RWPE1 (cell line): ENCODE measurements at regions of chr6 and their contacts with region 1.

Region 1: GRCh38 chr6:29336269-29336668 is 32.4 kb downstream of the OR5V1 start:
- DNase-seq: no peak
- H3K27ac ChIP-seq: no peak overlapping the region
- CTCF ChIP-seq: no peak

Region 2: GRCh38 chr6:29502597-29502996 is 166.3 kb after region 1 on chr6:
- CTCF ChIA-PET with region 1: interaction called, 11 read pairs
- POLR2A ChIA-PET with region 1: no interaction called
- DNase-seq: no peak
- H3K27ac ChIP-seq: no peak overlapping the region
- CTCF ChIP-seq: no peak